Activated naive CD4-positive, alpha-beta T cell treated with anti-CD3 and anti-CD28 coated beads for 36 hours (primary cell): ENCODE measurements at regions of chr17 and their contacts with region 1.

Region 1: GRCh38 chr17:38485146-38485468 is 56.8 kb downstream of the ARHGAP23 start:
- DNase-seq: no peak
- H3K4me3 Mint-ChIP-seq: no peak overlapping the region
- H3K27ac Mint-ChIP-seq: no peak overlapping the region
- H3K4me1 Mint-ChIP-seq: no peaks in the 10 kb centered on the region
- H3K27me3 Mint-ChIP-seq: no peaks in the 10 kb centered on the region

Region 2: GRCh38 chr17:38444151-38444550 is 41.0 kb before region 1 on chr17:
- CTCF ChIA-PET with region 1: interaction called, 5 read pairs
- intact Hi-C with region 1: loop called (anchors 1 kb)
- DNase-seq: peak; percentile 73
- H3K4me3 Mint-ChIP-seq: no peak overlapping the region
- H3K27ac Mint-ChIP-seq: no peak overlapping the region
- H3K4me1 Mint-ChIP-seq: peaks cover 3% of the 10 kb centered on the region
- H3K27me3 Mint-ChIP-seq: no peaks in the 10 kb centered on the region

Region 3: GRCh38 chr17:38456031-38456815 is 28.9 kb before region 1 on chr17:
- CTCF ChIA-PET with region 1: no interaction called
- intact Hi-C with region 1: no loop called
- DNase-seq: no peak
- H3K4me3 Mint-ChIP-seq: no peak overlapping the region
- H3K27ac Mint-ChIP-seq: no peak overlapping the region
- H3K4me1 Mint-ChIP-seq: peaks cover 15% of the 10 kb centered on the region
- H3K27me3 Mint-ChIP-seq: peaks cover 32% of the 10 kb centered on the region

Region 4: DNA sequence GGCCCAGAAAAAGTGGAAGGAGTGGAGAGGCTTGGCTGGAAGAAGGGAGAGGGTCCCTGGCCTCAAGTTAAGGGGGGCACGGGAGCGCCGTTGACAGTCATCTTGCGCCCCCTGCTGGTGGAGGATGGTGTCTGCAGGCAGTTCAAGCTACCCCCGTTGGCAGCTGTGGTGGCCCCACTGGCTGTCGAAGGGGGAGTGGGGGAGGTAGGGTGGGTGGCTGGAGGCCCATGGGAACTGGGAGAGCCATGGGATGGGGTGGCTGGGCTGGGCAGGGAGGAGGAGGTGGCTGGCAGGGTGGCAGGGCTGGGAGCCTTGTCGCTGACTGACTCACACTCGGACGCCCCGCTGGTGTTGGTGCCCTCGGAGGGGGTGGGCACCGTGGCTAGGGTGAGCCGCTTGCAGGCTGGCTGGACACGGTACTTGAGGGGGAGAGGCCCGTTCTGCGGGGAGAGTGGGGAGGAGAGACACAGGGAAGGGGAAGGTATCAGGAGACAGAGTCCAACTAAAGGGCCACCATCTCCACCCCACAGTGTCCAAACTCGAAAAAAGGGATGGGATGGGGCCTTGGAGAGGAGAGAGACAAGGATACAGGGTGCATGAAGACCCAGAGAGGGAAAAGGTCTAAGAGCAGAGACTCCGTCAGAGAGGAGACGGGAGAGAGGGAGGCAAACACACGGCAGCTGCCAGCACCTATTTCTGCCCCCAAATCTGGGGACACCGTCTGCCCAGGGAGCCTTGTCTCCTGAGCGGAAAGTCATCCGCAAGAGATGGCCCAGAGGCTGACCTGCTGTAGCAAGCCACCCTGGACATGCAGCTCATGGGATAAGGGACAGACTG is 250.3 kb after region 1 on chr17:
- CTCF ChIA-PET with region 1: no interaction called
- intact Hi-C with region 1: no loop called
- DNase-seq: peak; percentile 77
- H3K4me3 Mint-ChIP-seq: no peak overlapping the region
- H3K27ac Mint-ChIP-seq: peak overlapping the region; percentile 37
- H3K4me1 Mint-ChIP-seq: peaks cover 47% of the 10 kb centered on the region
- H3K27me3 Mint-ChIP-seq: no peaks in the 10 kb centered on the region